ENCODE measurements at regions of chr17 and their contacts with region 1.

Region 1: GRCh38 chr17:82022981-82023374 is at the start of gene LRRC45:
- DNase-seq: peak; percentile 100
- H3K4me3 ChIP-seq: peak within 1 kb of the TSS; percentile 63 to 92 (median 88)
- H3K27ac ChIP-seq: peak within 1 kb of the TSS; percentile 15
- H3K4me1 ChIP-seq: peaks cover 32% of the 10 kb centered on the region
- H3K27me3 ChIP-seq: no peaks in the 10 kb centered on the region
- CTCF ChIP-seq: no peak
- total RNA-seq, gene LRRC45: 4.5 to 10.9 TPM

Region 2: GRCh38 chr17:81871387-81872230 is 151.4 kb before region 1 on chr17:
- CTCF ChIA-PET with region 1: no interaction called
- dilution Hi-C with region 1: no loop called
- in situ Hi-C with region 1: no loop called
- intact Hi-C with region 1: loop called (anchors 5 kb)
- DNase-seq: peak; percentile 82
- H3K4me3 ChIP-seq: peak overlapping the region; percentile 64 to 88 (median 75)
- H3K27ac ChIP-seq: peak overlapping the region; percentile 86
- H3K4me1 ChIP-seq: peaks cover 33% of the 10 kb centered on the region
- H3K27me3 ChIP-seq: no peaks in the 10 kb centered on the region
- CTCF ChIP-seq: peak in 1 of 2 donors; percentile 42

Region 3: GRCh38 chr17:81959362-81960129 is 63.4 kb before region 1 on chr17:
- CTCF ChIA-PET with region 1: interaction called, 12 read pairs
- dilution Hi-C with region 1: no loop called
- in situ Hi-C with region 1: loop called in 1 of 2 experiments (anchors 10 kb)
- intact Hi-C with region 1: loop called (anchors 1 kb)
- DNase-seq: peak; percentile 33
- H3K4me3 ChIP-seq: no peak overlapping the region
- H3K27ac ChIP-seq: no peak overlapping the region
- H3K4me1 ChIP-seq: peaks cover 13% of the 10 kb centered on the region
- H3K27me3 ChIP-seq: peaks cover 26% of the 10 kb centered on the region
- CTCF ChIP-seq: peak; percentile 51 to 65

Region 4: DNA sequence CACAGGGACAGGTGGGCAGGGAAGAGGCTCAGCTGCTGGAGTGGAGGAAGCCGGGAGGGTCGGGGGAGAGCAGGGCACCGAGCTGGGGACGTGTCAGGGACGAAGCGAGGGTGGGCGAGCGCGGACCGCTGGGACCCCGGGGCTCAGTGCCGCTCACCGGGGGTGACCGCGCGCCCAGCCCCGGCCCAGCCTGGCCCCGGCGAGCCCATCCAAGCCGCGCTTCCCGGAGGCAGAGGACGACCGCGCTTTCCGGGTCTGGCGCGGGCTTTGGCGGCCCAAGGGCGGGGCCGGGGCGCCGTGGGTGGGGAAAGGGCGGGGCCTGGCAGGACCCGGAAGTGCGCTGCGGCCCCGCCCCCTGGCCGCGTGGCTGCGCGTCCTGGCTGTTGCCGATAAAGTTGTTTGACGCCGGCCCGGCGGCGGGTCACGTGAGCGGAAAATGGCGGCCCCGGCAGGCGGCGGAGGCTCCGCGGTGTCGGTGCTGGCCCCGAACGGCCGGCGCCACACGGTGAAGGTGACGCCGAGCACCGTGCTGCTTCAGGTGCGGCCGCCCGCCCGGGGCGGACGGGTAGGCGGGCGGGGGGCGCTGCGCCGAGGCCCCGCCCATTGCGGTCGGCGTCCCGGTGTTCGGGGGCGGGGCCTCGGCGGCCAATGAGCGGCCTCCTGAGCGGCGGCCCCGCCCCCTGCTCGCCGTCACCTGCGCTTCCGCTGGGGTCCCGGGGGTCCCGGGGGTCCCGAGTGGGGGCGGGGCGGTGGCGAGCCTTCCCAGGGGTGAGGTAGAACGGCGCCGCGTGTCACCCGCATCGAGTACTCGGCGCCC is 45.6 kb before region 1 on chr17 and contains the start of gene ASPSCR1:
- CTCF ChIA-PET with region 1: no interaction called
- dilution Hi-C with region 1: no loop called
- in situ Hi-C with region 1: no loop called
- intact Hi-C with region 1: loop called (anchors 5 kb)
- DNase-seq: peak; percentile 84
- H3K4me3 ChIP-seq: peak within 1 kb of the TSS; percentile 66 to 98 (median 73)
- H3K27ac ChIP-seq: peak within 1 kb of the TSS; percentile 80
- H3K4me1 ChIP-seq: peaks cover 16% of the 10 kb centered on the region
- H3K27me3 ChIP-seq: no peaks in the 10 kb centered on the region
- CTCF ChIP-seq: no peak
- total RNA-seq, gene ASPSCR1: 13.3 to 21.3 TPM

Region 5: DNA sequence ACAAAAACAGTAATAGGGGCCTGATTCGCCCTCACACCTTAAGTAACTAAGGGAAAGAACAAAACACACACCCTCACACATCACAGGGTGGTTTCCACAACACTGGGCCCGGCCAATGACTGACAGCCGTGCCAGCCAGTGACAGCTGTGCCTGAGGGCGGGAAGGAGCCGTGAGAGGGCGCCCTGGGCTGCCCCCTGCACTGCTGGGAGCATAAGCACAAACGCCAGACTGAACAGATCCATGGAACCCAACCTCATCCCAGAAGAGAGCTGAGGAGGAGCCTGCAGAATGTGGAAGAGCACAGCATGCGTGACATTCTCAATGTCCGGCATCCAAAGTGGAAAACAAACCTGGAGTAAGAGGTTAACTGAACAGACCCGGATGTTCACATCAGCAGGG is 234.5 kb after region 1 on chr17:
- CTCF ChIA-PET with region 1: interaction called, 19 read pairs
- dilution Hi-C with region 1: no loop called
- in situ Hi-C with region 1: no loop called
- intact Hi-C with region 1: no loop called
- DNase-seq: peak; percentile 67
- H3K4me3 ChIP-seq: no peak overlapping the region
- H3K27ac ChIP-seq: peak overlapping the region; percentile 33
- H3K4me1 ChIP-seq: no peaks in the 10 kb centered on the region
- H3K27me3 ChIP-seq: no peaks in the 10 kb centered on the region
- CTCF ChIP-seq: no peak

Measured in mammary epithelial cell (primary cell).